ENCODE measurements at regions of chr10 and their contacts with region 1.

Region 1: DNA sequence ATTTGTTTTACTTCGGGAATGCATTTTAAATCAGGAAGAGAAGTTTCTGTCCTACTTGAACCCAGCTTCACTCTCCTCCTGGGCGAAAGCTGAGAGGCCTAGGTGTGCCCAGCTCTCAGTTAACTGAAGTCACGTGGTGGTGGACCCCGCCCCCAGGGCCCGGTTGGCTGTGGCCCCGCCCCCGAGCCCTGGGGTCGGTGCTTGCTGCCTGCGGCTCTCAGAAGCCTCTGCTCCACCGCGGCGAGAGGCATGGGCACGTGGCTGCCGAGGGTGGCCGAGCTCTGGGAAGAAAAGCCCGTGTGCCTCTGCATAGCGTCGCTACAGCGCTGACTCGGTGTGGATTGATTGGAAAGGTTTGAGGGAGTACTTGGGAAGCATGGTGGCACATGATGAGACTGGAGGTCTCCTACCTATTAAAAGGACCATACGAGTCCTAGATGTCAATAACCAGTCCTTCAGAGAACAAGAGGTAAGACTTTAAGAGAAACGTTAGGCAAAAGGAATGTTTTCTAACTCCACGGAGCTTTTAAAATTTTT is 34.1 kb downstream of the NET1 start:
- DNase-seq: peak; percentile 84
- ATAC-seq: peak; percentile 91
- H3K4me3 ChIP-seq: peak overlapping the region; percentile 64
- H3K27ac ChIP-seq: peak overlapping the region; percentile 74
- H3K4me1 ChIP-seq: peaks cover 5% of the 10 kb centered on the region; the same call in 1 of the 2 replicates
- H3K27me3 ChIP-seq: no peaks in the 10 kb centered on the region
- CTCF ChIP-seq: no peak
- POLR2A ChIP-seq: peak; percentile 98
- RAD21 ChIP-seq: peak; percentile 5; the same call in 1 of the 2 replicates

Region 2: GRCh38 chr10:5548527-5549223 is 102.2 kb after region 1 on chr10:
- CTCF ChIA-PET with region 1: interaction called, 3 read pairs
- POLR2A ChIA-PET with region 1: no interaction called
- dilution Hi-C with region 1: no loop called
- in situ Hi-C with region 1: no loop called
- intact Hi-C with region 1: loop called (anchors 2 kb)
- DNase-seq: peak; percentile 99
- ATAC-seq: peak; percentile 76
- H3K4me3 ChIP-seq: no peak overlapping the region
- H3K27ac ChIP-seq: peak overlapping the region; percentile 82
- H3K4me1 ChIP-seq: peaks cover 52% of the 10 kb centered on the region
- H3K27me3 ChIP-seq: no peaks in the 10 kb centered on the region
- CTCF ChIP-seq: no peak
- POLR2A ChIP-seq: no peak; the same call in 1 of the 2 replicates
- RAD21 ChIP-seq: no peak

Region 3: GRCh38 chr10:5629303-5630111 is 183.0 kb after region 1 on chr10:
- CTCF ChIA-PET with region 1: interaction called, 24 read pairs
- POLR2A ChIA-PET with region 1: interaction called, 3 read pairs
- dilution Hi-C with region 1: no loop called
- in situ Hi-C with region 1: loop called (anchors 5 kb)
- intact Hi-C with region 1: no loop called
- DNase-seq: peak; percentile 96
- ATAC-seq: peak; percentile 96
- H3K4me3 ChIP-seq: no peak overlapping the region
- H3K27ac ChIP-seq: peak overlapping the region; percentile 13; the same call in 1 of the 2 replicates
- H3K4me1 ChIP-seq: peaks cover 5% of the 10 kb centered on the region; the same call in 1 of the 2 replicates
- H3K27me3 ChIP-seq: no peaks in the 10 kb centered on the region; the same call in 1 of the 2 replicates
- CTCF ChIP-seq: peak; percentile 96
- POLR2A ChIP-seq: no peak
- RAD21 ChIP-seq: peak; percentile 71